H1 (cell line): ENCODE measurements at regions of chr12 and their contacts with region 1.

Region 1: DNA sequence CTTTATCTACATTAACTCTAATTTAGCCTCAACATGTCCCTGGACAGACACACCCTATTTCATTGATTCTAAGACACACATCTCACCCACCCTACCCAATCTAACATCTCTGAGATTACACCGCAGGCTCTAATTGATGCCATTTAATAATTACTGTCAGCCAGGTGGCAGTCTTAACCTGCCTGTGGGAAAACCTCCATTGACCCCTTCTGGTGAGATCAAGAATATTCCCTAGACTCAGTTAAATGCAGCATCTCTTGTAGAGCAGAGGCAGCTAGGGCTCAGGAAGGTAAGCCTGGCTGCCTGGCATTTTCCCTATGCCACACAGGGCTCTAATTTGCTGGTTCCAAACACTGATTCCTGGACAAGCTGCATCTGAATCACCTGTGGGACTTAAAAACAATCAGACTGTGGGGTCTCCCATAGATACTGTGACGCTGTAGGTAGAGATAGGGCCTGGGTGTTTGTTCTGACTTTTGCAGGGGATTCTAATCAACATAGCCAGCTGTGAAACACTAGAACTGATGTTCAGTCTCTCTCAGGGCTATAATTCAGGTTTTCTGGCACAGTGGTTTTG is 14.3 kb downstream of the MCRS1 start:
- DNase-seq: no peak
- H3K4me3 ChIP-seq: no peak overlapping the region
- H3K27ac ChIP-seq: no peak overlapping the region
- H3K4me1 ChIP-seq: peaks cover 0 to 12% (median 8%) of the 10 kb centered on the region in 4 experiments; a peak in 6 of 7 replicates
- H3K27me3 ChIP-seq: peaks cover 4 to 28% (median 20%) of the 10 kb centered on the region in 4 experiments
- CTCF ChIP-seq: peak in 2 of 3 experiments; percentile 82 to 99; a peak in 3 of 4 replicates
- EP300 ChIP-seq: no peak
- POLR2A ChIP-seq: no peak
- RAD21 ChIP-seq: peak; percentile 75 to 85

Region 2: DNA sequence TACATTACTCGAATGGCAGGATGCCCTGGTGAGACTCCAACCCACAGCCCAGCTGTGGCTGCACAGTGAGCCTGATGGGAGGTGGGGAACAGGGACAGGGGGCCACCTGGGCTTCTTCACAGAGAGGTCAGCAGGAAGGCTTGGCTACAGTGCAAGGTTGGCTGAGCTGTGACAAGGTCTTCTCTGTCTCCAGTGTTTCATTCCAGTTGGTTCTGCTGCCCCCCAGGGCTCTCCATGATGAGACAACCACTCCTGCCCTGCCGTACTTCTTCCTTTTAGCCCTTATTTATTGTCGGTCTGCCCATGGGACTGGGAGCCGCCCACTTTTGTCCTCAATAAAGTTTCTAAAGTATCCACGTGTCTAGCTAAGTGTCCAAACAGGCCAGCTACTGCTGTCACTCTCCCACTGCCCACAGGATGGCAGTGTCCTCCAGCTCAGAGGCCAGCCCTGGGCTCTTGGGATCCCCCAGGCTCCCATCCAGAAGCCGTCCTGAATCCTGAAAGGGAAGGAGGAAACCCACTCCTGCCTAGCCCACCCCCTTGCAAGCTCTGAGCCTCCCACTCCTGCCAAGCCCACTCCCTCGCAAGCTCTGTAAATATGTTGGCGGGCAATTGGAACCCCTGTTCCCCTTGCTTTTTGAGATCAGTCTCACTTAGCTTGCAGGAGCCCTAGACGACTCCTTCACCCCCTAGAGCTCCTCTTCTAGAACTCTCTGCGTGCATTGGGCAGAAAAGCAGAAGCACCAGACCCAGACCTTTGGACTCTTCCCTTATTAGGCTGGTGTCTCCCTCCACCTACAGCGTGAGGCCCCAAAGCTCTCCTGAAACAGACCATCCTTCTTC is 222.0 kb before region 1 on chr12:
- CTCF ChIA-PET with region 1: interaction called, 19 read pairs
- POLR2A ChIA-PET with region 1: interaction called, 5 read pairs
- DNase-seq: peak in 1 of 2 experiments; percentile 68
- H3K4me3 ChIP-seq: no peak overlapping the region
- H3K27ac ChIP-seq: no peak overlapping the region
- H3K4me1 ChIP-seq: no peaks in the 10 kb centered on the region; a peak in 2 of 7 replicates
- H3K27me3 ChIP-seq: peaks cover 33 to 50% (median 43%) of the 10 kb centered on the region in 4 experiments
- CTCF ChIP-seq: peak; percentile 86 to 89 (median 88)
- EP300 ChIP-seq: no peak
- POLR2A ChIP-seq: no peak
- RAD21 ChIP-seq: peak; percentile 86 to 93

Region 3: GRCh38 chr12:49538510-49539403 is 14.8 kb before region 1 on chr12 and contains the start of gene KCNH3:
- CTCF ChIA-PET with region 1: interaction called, 91 read pairs
- POLR2A ChIA-PET with region 1: interaction called, 12 read pairs
- DNase-seq: peak in 1 of 2 experiments; percentile 76
- H3K4me3 ChIP-seq: peak within 1 kb of the TSS; percentile 29 to 56 (median 38)
- H3K27ac ChIP-seq: no peak within 1 kb of the TSS
- H3K4me1 ChIP-seq: peaks cover 0 to 25% (median 9%) of the 10 kb centered on the region in 4 experiments; a peak in 6 of 7 replicates
- H3K27me3 ChIP-seq: peaks cover 64 to 87% (median 84%) of the 10 kb centered on the region in 4 experiments
- CTCF ChIP-seq: no peak
- EP300 ChIP-seq: no peak
- POLR2A ChIP-seq: no peak
- RAD21 ChIP-seq: no peak
- total RNA-seq, gene KCNH3: 0.24 and 0.36 TPM in 2 replicates

Region 4: DNA sequence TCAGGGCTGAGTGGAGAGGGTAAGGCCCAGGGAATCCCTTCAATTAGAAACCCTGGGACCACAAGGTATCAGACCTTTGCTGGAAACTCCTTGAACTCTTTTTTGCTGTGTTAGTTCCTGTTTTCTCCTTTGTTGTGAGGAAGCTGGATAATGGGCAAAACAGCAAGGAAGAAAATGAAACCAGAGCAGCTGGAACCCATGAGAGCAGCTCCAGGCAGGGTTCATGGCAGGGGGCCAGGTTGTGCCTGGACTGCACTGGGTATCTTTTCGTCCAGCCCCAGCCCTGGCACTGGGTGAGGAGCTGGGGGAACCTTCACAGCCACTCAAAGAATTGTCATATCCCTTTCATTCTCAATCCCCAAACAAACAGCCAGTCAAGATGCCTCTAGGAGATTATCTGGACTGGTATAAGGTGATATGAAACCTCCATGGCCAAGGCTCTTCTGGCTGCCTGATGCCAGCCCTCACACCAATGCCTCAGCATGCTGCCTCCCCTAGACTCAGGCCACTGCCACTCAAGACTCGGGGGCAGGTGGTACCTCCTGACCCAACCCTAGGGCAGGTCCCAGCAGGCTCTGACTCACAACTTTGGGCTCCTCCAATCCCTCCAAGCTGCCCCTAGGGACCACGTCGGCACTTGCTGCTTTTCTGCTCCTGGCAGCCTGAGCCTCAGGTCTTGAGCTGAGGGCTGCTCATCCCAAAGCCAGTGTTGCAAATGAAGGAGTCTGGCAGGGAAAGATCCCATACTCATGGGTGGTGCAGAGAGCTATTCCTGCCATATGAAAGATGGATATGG is 35.3 kb after region 1 on chr12:
- CTCF ChIA-PET with region 1: interaction called, 171 read pairs
- POLR2A ChIA-PET with region 1: interaction called, 4 read pairs
- DNase-seq: no peak
- H3K4me3 ChIP-seq: no peak overlapping the region
- H3K27ac ChIP-seq: peak overlapping the region; percentile 38; the same call in 1 of the 2 replicates
- H3K4me1 ChIP-seq: no peaks in the 10 kb centered on the region; a peak in 1 of 7 replicates
- H3K27me3 ChIP-seq: no peaks in the 10 kb centered on the region
- CTCF ChIP-seq: no peak
- EP300 ChIP-seq: no peak
- POLR2A ChIP-seq: no peak
- RAD21 ChIP-seq: no peak

Region 5: GRCh38 chr12:49623142-49623904 is 69.7 kb after region 1 on chr12 and contains the start of gene PRPF40B:
- CTCF ChIA-PET with region 1: interaction called, 10 read pairs
- POLR2A ChIA-PET with region 1: interaction called, 3 read pairs
- DNase-seq: peak; percentile 78 to 95
- H3K4me3 ChIP-seq: peak within 1 kb of the TSS; percentile 50 to 73 (median 66)
- H3K27ac ChIP-seq: peak within 1 kb of the TSS; percentile 56; the same call in 1 of the 2 replicates
- H3K4me1 ChIP-seq: peaks cover 0 to 7% (median 3%) of the 10 kb centered on the region in 4 experiments; a peak in 6 of 7 replicates
- H3K27me3 ChIP-seq: no peaks in the 10 kb centered on the region
- CTCF ChIP-seq: peak; percentile 47 to 56 (median 54)
- EP300 ChIP-seq: 0 out of 3 replicates have a peak, but pooled peaks of 1 of the 2 experiments have one; percentile 7
- POLR2A ChIP-seq: no peak; a peak in 1 of 3 replicates
- RAD21 ChIP-seq: peak; percentile 27 to 47; a peak in 3 of 4 replicates
- total RNA-seq, gene PRPF40B: 24.4 and 26.8 TPM in 2 replicates